Left cardiac atrium (tissue), 4 donors: ENCODE measurements at regions of chrX and their contacts with region 1.

Region 1: DNA sequence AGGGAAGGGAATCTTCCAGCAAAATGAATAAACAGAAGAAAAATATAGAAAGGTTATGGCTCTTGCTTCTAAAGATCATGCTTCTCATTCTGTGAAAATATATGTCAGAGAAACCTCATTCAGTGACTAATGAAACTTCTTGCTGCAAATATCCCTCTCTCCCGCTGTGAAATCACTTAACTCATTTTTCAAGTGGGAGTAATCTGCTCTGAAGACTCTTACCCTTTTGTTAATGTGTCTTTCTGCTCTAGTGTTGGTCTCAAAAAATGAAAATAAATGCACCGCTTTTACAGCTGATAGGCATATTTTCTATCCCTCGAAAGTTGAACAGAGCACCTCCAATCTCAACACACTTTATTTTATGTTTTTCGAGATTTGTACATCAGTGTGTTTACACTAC is 252.3 kb downstream of the NLGN4X start:
- DNase-seq: no peak
- ATAC-seq: no peak

Region 2: DNA sequence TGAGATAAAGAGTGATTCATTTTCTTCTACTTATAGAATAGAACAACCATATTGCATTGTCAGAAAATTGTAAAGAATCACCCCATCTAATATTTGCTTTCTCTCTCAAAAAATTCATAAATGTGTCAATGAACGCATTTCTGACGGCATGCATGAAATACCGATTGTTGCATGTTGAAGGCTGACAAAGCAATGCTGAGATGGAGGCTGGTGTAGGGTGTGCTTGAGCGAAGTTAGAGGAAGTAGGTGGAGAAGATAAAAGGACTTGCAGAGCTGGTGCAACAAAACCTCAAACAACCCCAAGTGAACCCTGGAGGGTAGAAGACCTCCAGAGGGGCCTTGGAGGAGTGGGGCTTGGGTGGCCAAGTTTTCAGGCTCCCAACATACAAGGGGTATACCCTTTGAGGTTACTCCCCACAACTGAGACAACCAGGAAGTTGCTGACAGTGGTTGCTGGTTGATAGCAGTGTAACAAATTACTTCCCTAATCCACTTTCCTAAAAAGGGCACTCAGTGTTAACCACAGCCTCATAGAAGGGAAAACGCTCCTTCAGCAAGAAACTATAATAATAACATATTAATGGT is 200.4 kb before region 1 on chrX:
- intact Hi-C with region 1: no loop called
- DNase-seq: no peak
- ATAC-seq: no peak

Region 3: GRCh38 chrX:5998901-5999300 is 22.6 kb after region 1 on chrX:
- intact Hi-C with region 1: loop called in 1 of 2 experiments (anchors 1 kb)
- DNase-seq: no peak
- ATAC-seq: no peak

Region 4: GRCh38 chrX:6021316-6022091 is 45.2 kb after region 1 on chrX:
- intact Hi-C with region 1: no loop called
- DNase-seq: no peak
- ATAC-seq: no peak